ENCODE measurements at regions of chr17 and their contacts with region 1.

Region 1: DNA sequence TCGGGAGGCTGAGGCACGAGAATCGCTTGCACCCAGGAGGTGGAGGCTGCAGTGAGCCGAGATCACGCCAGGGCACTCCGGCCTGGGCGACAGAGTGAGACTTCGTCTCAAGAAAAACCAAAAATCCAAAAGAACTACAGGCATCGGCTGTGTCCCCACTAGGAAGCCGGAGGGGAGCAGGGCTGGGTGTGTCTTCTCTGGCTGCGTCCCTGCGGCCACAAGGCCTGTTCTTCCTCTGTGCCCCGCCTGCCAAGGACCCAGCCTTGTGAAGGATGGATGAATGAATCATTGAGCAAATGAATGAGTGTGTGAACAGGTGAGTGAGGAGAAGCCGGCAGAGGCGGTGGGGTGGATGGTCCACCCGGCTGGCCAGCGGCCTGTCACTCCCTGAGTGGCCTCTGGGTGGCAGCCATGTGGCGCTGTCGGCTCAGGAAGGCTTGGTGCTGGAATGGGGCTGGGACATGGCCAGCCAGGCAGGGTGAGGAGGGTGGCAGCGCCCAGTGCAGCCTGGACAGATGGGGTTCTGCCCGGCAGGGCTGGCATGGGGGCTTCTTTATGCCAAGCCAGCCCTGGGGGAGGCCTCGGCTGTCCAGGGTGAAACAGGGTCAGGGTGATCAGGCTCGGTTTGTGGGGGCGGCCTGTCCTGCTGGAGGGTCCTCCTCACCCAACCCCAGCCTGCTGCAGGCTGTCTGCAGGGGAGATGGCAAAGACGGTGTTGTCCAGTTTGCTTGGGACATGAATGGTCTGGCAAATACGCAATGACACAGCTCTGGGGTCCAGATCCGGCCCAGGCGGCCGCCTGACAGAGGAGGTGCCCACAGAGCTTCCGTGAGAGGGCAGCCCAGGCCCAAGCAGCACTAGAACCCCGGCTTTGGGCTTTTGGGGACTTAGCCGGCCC is 21.7 kb downstream of the SLC25A10 start:
- DNase-seq: peak; percentile 82 to 100
- ATAC-seq: peak; percentile 82 to 93
- H3K4me3 ChIP-seq: 0 out of 3 replicates have a peak overlapping the region, but pooled peaks have one; percentile 11
- H3K27ac ChIP-seq: peak overlapping the region in 1 of 2 experiments; percentile 11; a peak in 2 of 6 replicates
- H3K4me1 ChIP-seq: peaks cover 17% of the 10 kb centered on the region
- CTCF ChIP-seq: peak; percentile 97
- EP300 ChIP-seq: no peak
- POLR2A ChIP-seq: no peak
- RAD21 ChIP-seq: peak; percentile 97 to 98

Region 2: GRCh38 chr17:81552244-81553017 is 181.3 kb before region 1 on chr17 and contains the start of gene FAAP100:
- CTCF ChIA-PET with region 1: no interaction called
- POLR2A ChIA-PET with region 1: no interaction called
- DNase-seq: peak; percentile 89 to 90
- ATAC-seq: peak; percentile 65 to 68
- H3K4me3 ChIP-seq: peak within 1 kb of the TSS; percentile 86
- H3K27ac ChIP-seq: peak within 1 kb of the TSS; percentile 84 to 97
- H3K4me1 ChIP-seq: peaks cover 43% of the 10 kb centered on the region
- CTCF ChIP-seq: no peak
- EP300 ChIP-seq: no peak
- POLR2A ChIP-seq: peak; percentile 72
- RAD21 ChIP-seq: no peak
- polyA plus RNA-seq, gene FAAP100: 5.4 and 7.2 TPM in 2 replicates

Region 3: DNA sequence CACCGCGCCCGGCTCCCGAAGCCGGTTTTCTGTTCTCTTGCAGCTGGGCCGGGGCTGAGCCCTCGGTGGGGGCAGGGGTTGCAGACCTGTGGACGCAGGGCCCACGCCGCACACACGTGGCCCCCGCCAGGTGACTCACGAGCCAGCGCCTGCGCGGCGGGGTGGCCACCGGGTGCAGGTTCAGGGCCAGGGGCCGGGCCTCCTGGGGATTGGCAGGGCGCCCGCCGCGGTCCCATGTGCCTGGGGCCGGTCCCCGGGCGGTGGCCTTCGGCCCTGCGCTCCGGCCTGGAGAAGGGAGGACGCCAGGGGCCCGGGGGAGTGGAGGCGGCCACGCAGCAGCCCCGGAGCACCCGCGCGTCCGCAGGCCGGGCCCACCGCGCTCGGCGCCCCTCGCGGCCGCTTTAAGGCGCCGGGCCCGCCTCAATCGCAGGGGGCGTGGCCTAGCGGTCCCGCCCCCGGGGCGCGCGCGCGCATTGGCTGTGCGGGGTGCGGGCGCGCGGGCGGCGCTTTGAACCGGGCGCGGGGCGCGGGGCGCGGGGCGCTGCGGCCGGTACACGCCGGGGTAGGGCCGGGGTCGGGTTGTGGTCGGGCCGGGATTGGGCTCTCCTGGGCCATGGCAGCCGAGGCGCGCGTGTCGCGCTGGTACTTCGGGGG is 21.8 kb before region 1 on chr17 and contains the start of gene SLC25A10:
- CTCF ChIA-PET with region 1: interaction called, 24 read pairs
- POLR2A ChIA-PET with region 1: interaction called, 6 read pairs
- DNase-seq: peak; percentile 87 to 89
- ATAC-seq: peak; percentile 60 to 65
- H3K4me3 ChIP-seq: peak within 1 kb of the TSS; percentile 70
- H3K27ac ChIP-seq: peak within 1 kb of the TSS; percentile 95
- H3K4me1 ChIP-seq: peaks cover 20% of the 10 kb centered on the region
- CTCF ChIP-seq: no peak
- EP300 ChIP-seq: no peak
- POLR2A ChIP-seq: peak; percentile 36; the same call in 1 of the 2 replicates
- RAD21 ChIP-seq: no peak
- polyA plus RNA-seq, gene SLC25A10: 20.0 and 25.8 TPM in 2 replicates

Region 4: DNA sequence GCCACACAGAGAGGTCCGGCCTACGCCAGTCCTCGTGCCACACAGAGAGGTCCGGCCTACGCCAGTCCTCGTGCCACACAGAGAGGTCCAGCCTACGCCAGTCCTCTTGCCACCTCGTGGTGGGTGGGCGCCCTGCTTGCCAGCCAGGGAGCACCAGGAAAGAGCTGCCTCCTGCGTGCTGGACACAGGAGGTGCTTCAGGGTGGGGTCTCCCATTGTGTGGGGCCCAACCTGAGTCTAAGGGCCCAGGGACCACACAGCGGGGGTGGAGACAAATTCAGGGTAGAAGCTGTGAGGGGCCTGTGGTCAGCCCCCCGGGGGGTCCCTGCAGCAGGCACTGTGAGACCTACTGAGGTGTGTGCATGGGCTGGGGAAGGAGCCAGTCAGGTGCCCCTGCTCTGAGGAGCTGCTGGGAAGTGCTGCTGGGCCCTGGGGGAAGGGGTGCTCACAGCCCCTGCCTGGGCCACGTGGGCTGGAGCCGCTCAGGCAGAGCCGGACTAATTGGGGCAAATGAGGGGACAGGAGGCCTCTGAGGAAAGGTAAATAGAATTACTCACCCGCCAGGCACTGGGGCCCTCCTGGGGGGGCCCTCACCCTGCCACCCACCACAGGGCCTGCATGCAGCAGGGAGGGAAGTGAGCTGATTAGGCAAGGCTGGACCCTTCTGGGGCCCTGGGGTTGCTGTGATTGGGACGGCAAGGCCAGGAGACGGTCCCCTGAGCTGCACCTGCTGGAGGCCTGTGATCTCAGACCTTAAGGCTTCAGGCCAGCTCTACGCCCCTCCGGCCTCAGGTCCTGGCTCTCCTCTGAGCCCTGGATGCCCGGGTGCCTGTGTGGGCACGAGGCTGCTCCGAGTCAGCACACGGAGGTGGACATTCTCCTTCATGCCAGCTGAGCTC is 81.2 kb after region 1 on chr17:
- CTCF ChIA-PET with region 1: interaction called, 22 read pairs
- POLR2A ChIA-PET with region 1: no interaction called
- DNase-seq: no peak
- ATAC-seq: peak; percentile 14 to 37; a peak in 4 of 6 replicates
- H3K4me3 ChIP-seq: no peak overlapping the region
- H3K27ac ChIP-seq: peak overlapping the region; percentile 19 to 67; a peak in 3 of 6 replicates
- H3K4me1 ChIP-seq: peaks cover 32% of the 10 kb centered on the region
- CTCF ChIP-seq: no peak
- EP300 ChIP-seq: no peak
- POLR2A ChIP-seq: no peak
- RAD21 ChIP-seq: no peak

Region 5: DNA sequence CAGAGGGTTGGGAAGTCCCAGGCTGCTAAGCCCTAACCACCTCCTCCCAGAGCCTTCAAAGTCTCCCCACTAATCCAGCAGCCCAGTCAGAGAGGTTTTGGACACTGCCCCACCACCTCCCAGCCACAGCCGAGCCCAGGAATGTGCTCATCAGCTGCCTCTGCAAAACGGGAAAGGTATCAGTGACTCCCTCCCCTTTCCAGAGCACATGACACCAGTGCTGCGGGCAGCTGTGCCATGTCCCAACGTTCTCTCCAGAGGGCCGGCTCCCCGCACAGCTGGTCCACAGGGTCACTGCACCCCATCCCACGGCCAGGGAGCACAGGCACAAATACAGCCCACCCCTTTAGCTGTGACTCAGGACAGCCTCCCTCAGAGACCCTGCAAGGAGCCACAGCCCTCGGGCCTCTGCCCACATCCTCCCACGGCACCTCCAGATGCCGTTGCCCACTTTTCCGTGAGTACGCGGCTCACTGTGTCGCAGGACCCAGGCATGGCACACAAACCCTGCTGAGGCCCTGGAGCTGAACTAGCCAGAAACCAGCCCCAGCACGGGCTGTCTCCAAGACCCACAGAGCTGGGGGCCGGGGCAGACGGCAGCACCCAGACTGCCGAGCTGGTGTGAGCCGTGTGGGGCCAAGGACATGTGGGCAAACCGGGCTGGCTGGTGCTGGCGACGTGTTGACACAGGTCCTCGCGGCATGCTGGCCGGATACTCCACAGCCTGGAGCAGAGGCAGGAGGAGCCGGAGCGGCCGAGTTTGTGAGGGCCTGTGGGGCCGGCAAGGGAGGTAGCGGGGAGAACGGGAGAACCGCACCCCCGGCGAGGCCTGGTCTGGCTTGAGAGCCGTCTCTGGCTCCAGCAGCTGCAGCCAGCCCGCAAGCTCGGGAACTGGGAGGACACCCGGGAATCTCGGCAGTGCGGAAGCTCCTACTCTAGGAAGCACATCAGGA is 107.3 kb after region 1 on chr17:
- CTCF ChIA-PET with region 1: interaction called, 96 read pairs
- POLR2A ChIA-PET with region 1: no interaction called
- DNase-seq: no peak
- ATAC-seq: peak; percentile 6 to 9; a peak in 4 of 6 replicates
- H3K4me3 ChIP-seq: no peak overlapping the region
- H3K27ac ChIP-seq: no peak overlapping the region
- H3K4me1 ChIP-seq: no peaks in the 10 kb centered on the region
- CTCF ChIP-seq: no peak
- EP300 ChIP-seq: no peak
- POLR2A ChIP-seq: no peak
- RAD21 ChIP-seq: no peak

Region 6: DNA sequence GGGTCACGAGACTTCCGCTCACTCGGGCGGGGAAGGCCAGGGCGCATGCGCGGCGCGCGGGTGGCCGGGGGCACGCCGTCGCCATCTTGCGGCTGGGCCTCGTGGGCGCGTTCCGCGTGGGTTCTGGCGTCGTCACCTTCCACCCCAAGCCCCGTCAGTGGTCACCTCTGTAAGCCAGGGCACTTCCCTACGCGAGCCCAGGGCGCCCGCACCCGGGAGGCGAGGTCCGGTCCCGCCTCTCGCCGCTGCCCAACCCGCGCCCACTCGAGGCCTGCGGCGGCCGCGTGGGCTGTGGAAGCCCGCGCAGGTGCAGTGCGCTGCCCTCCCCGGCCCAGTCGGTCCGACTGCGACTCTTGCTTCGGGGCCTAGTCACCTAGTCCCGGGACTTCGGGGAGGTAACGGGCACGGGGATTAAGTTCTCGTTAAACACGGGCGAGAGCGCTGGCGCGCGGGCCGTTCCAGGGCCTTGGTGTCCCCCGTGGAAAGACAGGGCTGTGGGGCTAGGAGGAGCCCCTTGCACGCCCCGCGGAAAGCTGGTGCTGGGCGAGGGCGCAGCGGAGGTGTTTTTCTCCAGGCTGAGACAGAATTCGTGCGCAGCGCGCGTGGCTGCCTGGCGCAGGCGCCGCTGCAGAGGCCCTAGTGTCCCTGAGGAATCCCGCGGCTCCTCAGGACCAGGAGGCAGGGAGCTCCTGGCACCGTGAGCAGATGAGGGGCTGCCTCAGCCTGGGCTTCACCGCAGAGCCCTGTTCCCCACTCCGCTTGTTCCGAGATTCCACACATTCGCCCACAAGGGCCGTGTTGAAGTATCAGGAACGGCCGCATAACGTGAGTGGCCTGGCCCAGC is 137.9 kb after region 1 on chr17:
- CTCF ChIA-PET with region 1: interaction called, 25 read pairs
- POLR2A ChIA-PET with region 1: interaction called, 3 read pairs
- DNase-seq: peak; percentile 95 to 96
- ATAC-seq: no peak
- H3K4me3 ChIP-seq: peak overlapping the region; percentile 99
- H3K27ac ChIP-seq: peak overlapping the region; percentile 97 to 100
- H3K4me1 ChIP-seq: peaks cover 41% of the 10 kb centered on the region
- CTCF ChIP-seq: no peak; the same call in 2 of the 3 replicates
- EP300 ChIP-seq: no peak
- POLR2A ChIP-seq: peak; percentile 77
- RAD21 ChIP-seq: no peak; a peak in 1 of 5 replicates